H1 (cell line): ENCODE measurements at regions of chr1 and their contacts with region 1.

Region 1: DNA sequence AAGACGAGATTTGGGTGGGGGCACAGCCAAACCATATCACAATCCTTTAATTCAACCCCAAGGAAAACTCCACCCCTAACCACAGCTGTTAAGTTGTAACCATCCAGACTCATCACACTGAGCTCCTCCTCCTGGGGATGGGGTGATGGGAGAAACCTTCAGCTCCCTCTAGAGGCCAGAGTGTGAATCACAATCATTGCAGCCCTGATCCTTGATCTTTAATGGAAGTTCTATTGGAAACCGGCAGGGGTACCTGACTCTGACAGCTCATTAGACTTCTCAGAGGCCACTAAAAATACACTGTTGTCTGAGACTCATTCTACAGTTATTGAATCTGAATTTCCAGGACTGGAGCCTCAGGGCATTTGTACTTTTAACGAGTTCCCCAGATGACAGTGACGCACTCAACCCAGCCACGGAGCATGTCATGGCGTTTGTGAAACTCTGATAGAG is 127.2 kb downstream of the IGSF21 start:
- DNase-seq: peak; percentile 57 to 86
- H3K4me3 ChIP-seq: no peak overlapping the region
- H3K27ac ChIP-seq: no peak overlapping the region
- H3K4me1 ChIP-seq: peaks cover 6 to 24% (median 14%) of the 10 kb centered on the region in 4 experiments; a peak in 6 of 7 replicates
- H3K27me3 ChIP-seq: no peaks in the 10 kb centered on the region
- CTCF ChIP-seq: peak; percentile 47 to 96 (median 95)
- EP300 ChIP-seq: 0 out of 3 replicates have a peak, but pooled peaks of 1 of the 2 experiments have one; percentile 10
- POLR2A ChIP-seq: no peak
- RAD21 ChIP-seq: peak; percentile 55 to 75

Region 2: GRCh38 chr1:17984583-17984982 is 250.2 kb before region 1 on chr1:
- CTCF ChIA-PET with region 1: interaction called, 11 read pairs
- POLR2A ChIA-PET with region 1: no interaction called
- DNase-seq: peak; percentile 27 to 86
- H3K4me3 ChIP-seq: no peak overlapping the region
- H3K27ac ChIP-seq: no peak overlapping the region
- H3K4me1 ChIP-seq: peaks cover 0 to 3% (median 0%) of the 10 kb centered on the region in 4 experiments; a peak in 2 of 7 replicates
- H3K27me3 ChIP-seq: peaks cover 0 to 2% (median 0%) of the 10 kb centered on the region in 4 experiments; a peak in 2 of 7 replicates
- CTCF ChIP-seq: peak; percentile 77 to 93 (median 83)
- EP300 ChIP-seq: no peak
- POLR2A ChIP-seq: no peak
- RAD21 ChIP-seq: peak; percentile 79 to 82

Region 3: GRCh38 chr1:18217398-18218043 is 17.3 kb before region 1 on chr1:
- CTCF ChIA-PET with region 1: interaction called, 67 read pairs
- POLR2A ChIA-PET with region 1: interaction called, 5 read pairs
- DNase-seq: peak; percentile 27 to 68
- H3K4me3 ChIP-seq: no peak overlapping the region
- H3K27ac ChIP-seq: no peak overlapping the region
- H3K4me1 ChIP-seq: no peaks in the 10 kb centered on the region
- H3K27me3 ChIP-seq: no peaks in the 10 kb centered on the region; a peak in 1 of 7 replicates
- CTCF ChIP-seq: peak; percentile 76 to 87 (median 76)
- EP300 ChIP-seq: no peak
- POLR2A ChIP-seq: no peak
- RAD21 ChIP-seq: peak; percentile 68 to 81

Region 4: GRCh38 chr1:18256282-18257235 is 21.7 kb after region 1 on chr1:
- CTCF ChIA-PET with region 1: interaction called, 19 read pairs
- POLR2A ChIA-PET with region 1: interaction called, 5 read pairs
- DNase-seq: peak; percentile 41 to 94
- H3K4me3 ChIP-seq: no peak overlapping the region
- H3K27ac ChIP-seq: no peak overlapping the region
- H3K4me1 ChIP-seq: peaks cover 0 to 5% (median under 1%) of the 10 kb centered on the region in 4 experiments; a peak in 4 of 7 replicates
- H3K27me3 ChIP-seq: peaks cover 0 to 3% (median 0%) of the 10 kb centered on the region in 4 experiments; a peak in 2 of 7 replicates
- CTCF ChIP-seq: no peak
- EP300 ChIP-seq: no peak
- POLR2A ChIP-seq: no peak
- RAD21 ChIP-seq: peak; percentile 3 to 23; a peak in 2 of 4 replicates

Region 5: DNA sequence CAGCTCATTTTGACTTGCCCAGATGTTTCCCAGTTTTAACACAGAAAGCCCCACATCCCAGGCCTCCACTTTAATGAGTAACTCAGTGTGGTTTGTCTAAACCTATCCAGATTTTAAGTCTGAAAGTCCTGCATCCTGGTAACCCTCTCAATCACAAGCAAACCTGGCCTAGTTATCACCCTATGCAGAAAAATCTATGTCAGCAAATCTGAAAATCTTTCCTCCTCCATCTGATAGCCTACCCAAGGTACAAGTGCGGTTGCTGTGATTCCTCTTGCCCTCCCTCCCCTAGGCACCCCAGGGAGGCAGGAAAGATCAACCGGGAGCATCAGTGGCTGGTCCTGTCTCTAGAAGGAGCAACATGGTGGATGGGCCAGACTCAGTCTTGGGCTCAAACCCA is 36.5 kb after region 1 on chr1:
- CTCF ChIA-PET with region 1: interaction called, 15 read pairs
- POLR2A ChIA-PET with region 1: no interaction called
- DNase-seq: no peak
- H3K4me3 ChIP-seq: no peak overlapping the region
- H3K27ac ChIP-seq: no peak overlapping the region
- H3K4me1 ChIP-seq: peaks cover 0 to 3% (median 0%) of the 10 kb centered on the region in 4 experiments; a peak in 1 of 7 replicates
- H3K27me3 ChIP-seq: no peaks in the 10 kb centered on the region
- CTCF ChIP-seq: no peak
- EP300 ChIP-seq: no peak
- POLR2A ChIP-seq: no peak
- RAD21 ChIP-seq: no peak

Region 6: DNA sequence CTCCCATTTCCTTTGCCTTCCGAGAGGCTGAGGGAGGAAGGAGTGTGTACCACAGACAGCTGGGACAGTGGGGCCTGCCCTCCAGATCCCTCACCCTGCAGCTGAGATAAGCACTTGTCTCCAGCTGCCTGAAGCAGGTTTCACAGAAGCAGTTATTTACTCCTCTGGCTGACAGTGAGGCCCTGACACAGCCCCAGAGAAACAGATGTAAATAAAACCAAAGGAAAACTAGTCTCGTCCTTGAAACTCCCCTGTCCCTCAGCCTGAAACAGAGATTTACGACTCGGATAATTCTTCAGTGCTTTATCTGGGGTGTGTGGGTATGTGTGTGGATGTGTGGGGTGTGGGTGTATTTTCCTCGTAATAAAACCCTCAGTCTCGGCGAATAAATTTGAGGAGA is 53.9 kb after region 1 on chr1:
- CTCF ChIA-PET with region 1: interaction called, 10 read pairs
- POLR2A ChIA-PET with region 1: interaction called, 5 read pairs
- DNase-seq: no peak
- H3K4me3 ChIP-seq: no peak overlapping the region
- H3K27ac ChIP-seq: no peak overlapping the region; the same call in 1 of the 2 replicates
- H3K4me1 ChIP-seq: peaks cover 3 to 27% (median 16%) of the 10 kb centered on the region in 4 experiments
- H3K27me3 ChIP-seq: no peaks in the 10 kb centered on the region; a peak in 1 of 7 replicates
- CTCF ChIP-seq: no peak
- EP300 ChIP-seq: no peak
- POLR2A ChIP-seq: no peak
- RAD21 ChIP-seq: no peak

Region 7: DNA sequence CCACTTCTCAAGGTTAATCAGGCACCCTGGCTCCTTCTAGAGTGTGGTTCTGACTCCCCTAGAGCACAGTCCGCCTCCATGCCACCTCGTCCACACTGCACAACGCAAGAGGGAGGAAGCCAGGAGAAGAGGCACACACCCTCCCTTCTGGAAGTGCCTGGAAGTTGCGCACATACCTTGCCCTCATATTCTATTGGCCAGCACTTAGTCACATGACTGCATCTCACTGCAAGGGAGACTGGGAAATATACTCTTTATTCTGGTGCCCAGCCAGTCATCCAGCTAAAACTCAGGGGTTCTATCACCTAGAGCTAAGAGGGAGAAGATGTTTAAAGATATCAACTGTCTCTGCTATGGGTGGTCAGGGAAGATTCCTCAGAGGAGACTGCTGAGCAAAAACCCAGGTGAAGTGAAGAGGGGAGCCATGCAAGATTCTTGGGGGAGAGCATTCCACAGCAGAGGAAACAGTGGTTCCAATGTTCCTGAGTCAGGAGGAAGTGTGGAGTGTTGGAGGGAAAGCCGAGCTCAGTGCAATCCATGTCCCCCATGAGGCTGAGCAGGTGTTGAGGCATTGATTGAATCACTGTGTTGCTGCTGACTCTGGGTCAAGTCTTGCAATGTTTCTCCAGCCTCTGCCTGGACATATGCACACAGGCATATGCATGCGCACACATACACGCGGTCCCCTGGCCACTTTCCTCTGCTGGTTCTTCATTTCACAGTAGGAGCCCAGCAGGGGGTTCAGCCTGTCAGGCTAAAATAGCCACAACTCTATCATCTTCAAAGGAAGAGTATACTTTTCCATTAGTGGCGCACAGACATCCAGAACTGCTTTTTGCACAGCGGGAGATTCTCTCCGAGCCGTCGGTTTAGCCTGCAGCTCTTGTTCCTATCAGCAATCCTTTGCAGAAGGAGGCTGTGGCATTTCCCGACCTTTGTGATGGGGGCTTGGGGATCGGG is 223.6 kb after region 1 on chr1:
- CTCF ChIA-PET with region 1: no interaction called
- POLR2A ChIA-PET with region 1: no interaction called
- DNase-seq: no peak
- H3K4me3 ChIP-seq: no peak overlapping the region
- H3K27ac ChIP-seq: no peak overlapping the region
- H3K4me1 ChIP-seq: no peaks in the 10 kb centered on the region; a peak in 1 of 7 replicates
- H3K27me3 ChIP-seq: no peaks in the 10 kb centered on the region; a peak in 2 of 7 replicates
- CTCF ChIP-seq: no peak
- EP300 ChIP-seq: no peak
- POLR2A ChIP-seq: no peak
- RAD21 ChIP-seq: no peak